Activated naive CD4-positive, alpha-beta T cell treated with anti-CD3 and anti-CD28 coated beads for 36 hours (primary cell): ENCODE measurements at regions of chrX and their contacts with region 1.

Region 1: GRCh38 chrX:13653022-13653693 is at the start of gene TCEANC:
- DNase-seq: peak; percentile 95
- H3K4me3 Mint-ChIP-seq: peak within 1 kb of the TSS; percentile 88
- H3K27ac Mint-ChIP-seq: peak within 1 kb of the TSS; percentile 93
- H3K4me1 Mint-ChIP-seq: peaks cover 24% of the 10 kb centered on the region
- H3K27me3 Mint-ChIP-seq: no peaks in the 10 kb centered on the region
- total RNA-seq, gene TCEANC: 2.5 to 2.7 TPM

Region 2: GRCh38 chrX:13734278-13735172 is 81.4 kb after region 1 on chrX and contains the starts of genes OFD1 and TRAPPC2:
- CTCF ChIA-PET with region 1: no interaction called
- intact Hi-C with region 1: loop called (anchors 1 kb)
- DNase-seq: peak; percentile 92
- H3K4me3 Mint-ChIP-seq: peak within 1 kb of the TSS; percentile 95
- H3K27ac Mint-ChIP-seq: peak within 1 kb of the TSS; percentile 92
- H3K4me1 Mint-ChIP-seq: peaks cover 43% of the 10 kb centered on the region
- H3K27me3 Mint-ChIP-seq: no peaks in the 10 kb centered on the region
- total RNA-seq, gene OFD1: 25.3 to 26.2 TPM
- total RNA-seq, gene TRAPPC2: 9.6 to 10.7 TPM

Region 3: GRCh38 chrX:13966071-13966792 is 313.1 kb after region 1 on chrX:
- CTCF ChIA-PET with region 1: no interaction called
- intact Hi-C with region 1: no loop called
- DNase-seq: no peak
- H3K4me3 Mint-ChIP-seq: no peak overlapping the region
- H3K27ac Mint-ChIP-seq: no peak overlapping the region
- H3K4me1 Mint-ChIP-seq: no peaks in the 10 kb centered on the region
- H3K27me3 Mint-ChIP-seq: no peaks in the 10 kb centered on the region